ENCODE measurements at regions of chr6 and their contacts with region 1.

Region 1: DNA sequence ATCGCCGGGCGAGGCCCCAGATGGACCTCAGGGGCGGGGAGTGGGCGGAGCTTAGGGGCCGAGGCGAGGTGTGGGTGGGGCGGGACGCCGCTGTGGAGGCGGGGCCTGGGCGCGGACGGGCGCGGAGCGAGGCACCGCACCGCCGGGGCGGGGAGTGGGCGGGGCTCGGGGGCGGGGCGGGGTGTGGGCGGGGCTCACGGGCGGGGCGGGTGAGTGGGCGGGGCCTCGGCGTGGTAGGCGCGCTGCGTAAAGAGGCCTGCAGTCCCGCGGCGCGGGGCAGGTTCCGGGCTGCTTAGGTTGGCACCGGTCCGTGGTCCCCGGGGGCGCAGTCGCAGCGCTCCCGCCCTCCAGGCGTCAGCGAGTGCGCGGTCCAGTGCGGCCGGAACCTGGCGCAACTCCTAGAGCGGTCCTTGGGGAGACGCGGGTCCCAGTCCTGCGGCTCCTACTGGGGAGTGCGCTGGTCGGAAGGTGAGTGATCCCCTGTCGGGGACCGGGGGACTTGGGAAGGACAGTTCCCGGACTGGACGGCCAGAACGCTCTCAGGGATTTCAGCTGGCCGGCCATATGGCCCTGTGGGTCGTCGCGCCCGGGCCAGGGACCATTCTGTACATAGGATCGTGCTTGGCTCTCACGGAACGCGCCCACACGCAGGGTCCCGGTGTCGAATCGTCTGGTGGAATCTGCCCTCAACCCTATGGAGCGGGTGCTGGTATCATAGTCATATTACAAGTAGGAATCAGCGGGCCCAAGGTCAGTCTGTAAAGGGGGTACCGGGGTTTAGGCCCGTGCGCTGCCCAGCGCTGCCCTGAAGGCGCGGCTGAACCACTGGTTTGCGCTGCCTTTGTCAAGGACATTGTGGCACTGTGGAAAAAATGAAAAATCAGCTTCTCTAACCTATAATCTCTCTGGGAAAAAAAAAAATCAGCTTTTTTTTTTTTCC is at the start of gene NQO2:
- DNase-seq: peak; percentile 13
- ATAC-seq: peak; percentile 92
- H3K4me3 ChIP-seq: peak within 1 kb of the TSS; percentile 87
- H3K27ac ChIP-seq: no peak within 1 kb of the TSS; the same call in 1 of the 2 replicates
- H3K4me1 ChIP-seq: peaks cover 12% of the 10 kb centered on the region
- H3K27me3 ChIP-seq: no peaks in the 10 kb centered on the region
- CTCF ChIP-seq: no peak
- EP300 ChIP-seq: no peak
- POLR2A ChIP-seq: peak; percentile 87
- RAD21 ChIP-seq: no peak
- polyA plus RNA-seq, gene NQO2: 0.55 to 0.66 TPM

Region 2: DNA sequence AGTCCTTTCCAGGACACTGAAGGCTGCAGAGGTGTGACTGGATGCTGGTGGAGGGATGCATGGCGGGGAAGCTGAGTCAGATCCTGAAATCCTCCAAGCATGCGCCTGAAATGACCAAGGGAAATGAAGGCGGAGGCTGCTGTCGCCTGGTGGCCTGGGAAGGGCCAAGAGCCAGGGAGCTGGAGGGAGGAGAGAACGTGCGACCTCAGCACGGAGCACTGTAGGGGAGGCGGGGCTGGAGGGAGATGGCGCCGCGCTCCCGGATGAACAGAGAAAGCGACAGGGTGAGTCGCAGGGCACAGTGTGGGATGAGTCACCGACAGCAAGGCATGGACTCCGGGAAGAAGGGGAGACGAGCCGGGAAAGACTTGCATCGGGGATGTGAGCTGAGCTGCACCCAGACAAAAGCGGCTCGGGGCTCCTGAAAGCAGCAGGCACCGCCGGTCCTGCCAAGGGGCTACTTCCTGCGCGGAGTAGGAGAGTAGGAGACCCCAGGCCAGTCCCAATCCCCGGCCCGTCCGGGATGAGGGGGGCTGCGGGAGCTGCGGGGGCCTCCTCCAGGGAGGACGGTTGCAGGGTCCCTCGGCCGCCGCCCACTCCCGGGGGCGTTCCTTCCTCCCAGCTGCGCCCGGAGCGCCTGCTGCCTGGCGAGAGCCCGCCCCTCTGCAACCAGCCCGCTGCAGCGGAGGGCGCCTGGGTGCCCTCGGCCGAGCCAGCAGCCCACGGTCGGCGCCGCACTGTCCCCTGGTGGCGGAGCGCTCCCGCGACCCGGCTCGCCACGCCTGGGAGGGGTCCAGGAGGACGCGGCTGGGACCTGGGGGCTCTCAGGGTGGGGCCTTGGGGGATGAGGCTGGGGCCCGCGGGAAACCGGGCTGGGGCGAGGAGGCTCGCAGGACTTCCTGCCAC is 11.2 kb before region 1 on chr6:
- CTCF ChIA-PET with region 1: interaction called, 54 read pairs
- POLR2A ChIA-PET with region 1: interaction called, 6 read pairs
- RAD21 ChIA-PET with region 1: interaction called, 11 read pairs
- SMC1A ChIA-PET with region 1: interaction called, 14 read pairs
- in situ Hi-C with region 1: no loop called
- intact Hi-C with region 1: no loop called
- DNase-seq: no peak
- ATAC-seq: peak; percentile 92
- H3K4me3 ChIP-seq: peak overlapping the region; percentile 71
- H3K27ac ChIP-seq: peak overlapping the region; percentile 79
- H3K4me1 ChIP-seq: peaks cover 13% of the 10 kb centered on the region
- H3K27me3 ChIP-seq: peaks cover 0 to 2% of the 10 kb centered on the region in 2 experiments; a peak in 3 of 4 replicates
- CTCF ChIP-seq: peak; percentile 56 to 75 (median 73)
- EP300 ChIP-seq: no peak; a peak in 1 of 4 replicates
- POLR2A ChIP-seq: peak; percentile 64
- RAD21 ChIP-seq: peak; percentile 73

Region 3: DNA sequence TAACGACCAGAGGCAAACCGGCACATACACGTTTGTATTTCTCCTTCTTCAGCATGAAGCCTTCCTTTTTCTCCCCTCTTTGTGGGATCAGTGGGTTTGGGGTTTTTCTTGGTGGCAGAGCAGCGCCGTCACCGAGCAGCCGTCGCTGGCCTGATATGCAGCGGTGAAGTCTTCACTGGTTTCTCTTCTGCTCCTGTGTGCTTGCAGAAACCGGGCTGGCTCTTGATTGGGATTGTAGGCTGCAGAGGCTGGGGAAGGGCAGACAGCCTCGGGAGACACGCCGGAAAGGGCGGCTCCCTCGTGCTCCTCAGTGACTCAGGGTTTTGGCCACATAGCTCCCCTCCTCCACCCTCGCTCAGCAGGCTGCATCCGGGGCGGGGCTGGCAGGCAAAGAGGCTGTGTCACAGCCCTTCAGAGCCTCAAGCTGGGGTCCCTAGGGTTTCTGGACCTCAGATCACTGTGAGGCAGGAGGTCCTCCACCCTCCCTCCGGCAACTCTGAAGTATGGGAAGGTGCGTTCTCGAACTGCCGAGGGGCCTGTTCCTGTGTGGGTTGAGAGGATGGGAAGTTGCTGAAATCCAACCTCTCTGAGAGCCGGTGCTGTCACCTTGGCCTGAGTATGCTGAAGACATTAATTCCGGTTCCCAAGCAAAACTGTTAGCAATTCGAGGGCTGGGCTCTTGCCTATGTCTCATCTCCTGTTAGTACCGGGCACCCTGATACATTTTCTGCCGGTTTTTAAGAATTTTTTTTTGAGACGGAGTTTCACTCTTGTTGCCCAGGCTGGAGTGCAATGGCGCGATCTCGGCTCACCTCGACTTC is 24.0 kb after region 1 on chr6:
- CTCF ChIA-PET with region 1: interaction called, 13 read pairs
- POLR2A ChIA-PET with region 1: no interaction called
- RAD21 ChIA-PET with region 1: interaction called, 11 read pairs
- SMC1A ChIA-PET with region 1: interaction called, 10 read pairs
- in situ Hi-C with region 1: no loop called
- intact Hi-C with region 1: loop called (anchors 1 kb)
- DNase-seq: peak; percentile 63
- ATAC-seq: peak; percentile 90
- H3K4me3 ChIP-seq: peak overlapping the region; percentile 71
- H3K27ac ChIP-seq: peak overlapping the region; percentile 88
- H3K4me1 ChIP-seq: peaks cover 40% of the 10 kb centered on the region
- H3K27me3 ChIP-seq: no peaks in the 10 kb centered on the region
- CTCF ChIP-seq: no peak
- EP300 ChIP-seq: peak in 1 of 2 experiments; percentile 54; a peak in 1 of 4 replicates
- POLR2A ChIP-seq: peak; percentile 73
- RAD21 ChIP-seq: no peak

Region 4: DNA sequence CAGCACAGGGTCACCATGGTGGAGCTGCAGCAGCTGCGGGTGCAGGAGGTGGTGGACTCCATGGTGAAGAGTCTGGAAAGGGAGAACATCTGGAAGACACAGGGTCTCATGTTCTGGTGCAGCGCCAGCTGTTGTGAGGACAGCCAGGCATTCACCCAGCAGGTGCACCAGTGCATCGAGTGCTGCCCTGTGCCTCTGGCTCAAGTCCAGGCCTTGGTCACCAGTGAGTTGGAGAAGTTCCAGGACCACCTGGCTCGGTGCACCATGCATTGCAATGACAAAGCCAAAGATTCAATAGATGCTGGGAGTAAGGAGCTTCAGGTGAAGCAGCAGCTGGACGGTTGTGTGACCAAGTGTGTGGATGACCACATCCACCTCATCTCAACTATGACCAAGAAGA is 45.5 kb after region 1 on chr6:
- CTCF ChIA-PET with region 1: interaction called, 12 read pairs
- POLR2A ChIA-PET with region 1: no interaction called
- RAD21 ChIA-PET with region 1: interaction called, 3 read pairs
- SMC1A ChIA-PET with region 1: interaction called, 4 read pairs
- in situ Hi-C with region 1: loop called (anchors 5 kb)
- intact Hi-C with region 1: no loop called
- DNase-seq: no peak
- ATAC-seq: no peak
- H3K4me3 ChIP-seq: no peak overlapping the region
- H3K27ac ChIP-seq: no peak overlapping the region
- H3K4me1 ChIP-seq: no peaks in the 10 kb centered on the region
- H3K27me3 ChIP-seq: peaks cover 0 to 6% of the 10 kb centered on the region in 2 experiments; a peak in 2 of 4 replicates
- CTCF ChIP-seq: no peak
- EP300 ChIP-seq: no peak
- POLR2A ChIP-seq: no peak
- RAD21 ChIP-seq: no peak

Region 5: GRCh38 chr6:3052481-3053230 is 52.8 kb after region 1 on chr6:
- CTCF ChIA-PET with region 1: interaction called, 23 read pairs
- POLR2A ChIA-PET with region 1: no interaction called
- RAD21 ChIA-PET with region 1: interaction called, 12 read pairs
- SMC1A ChIA-PET with region 1: interaction called, 18 read pairs
- in situ Hi-C with region 1: loop called (anchors 5 kb)
- intact Hi-C with region 1: no loop called
- DNase-seq: no peak
- ATAC-seq: no peak
- H3K4me3 ChIP-seq: no peak overlapping the region
- H3K27ac ChIP-seq: no peak overlapping the region
- H3K4me1 ChIP-seq: no peaks in the 10 kb centered on the region
- H3K27me3 ChIP-seq: peaks cover 2 to 3% of the 10 kb centered on the region in 2 experiments; a peak in 3 of 4 replicates
- CTCF ChIP-seq: no peak
- EP300 ChIP-seq: no peak
- POLR2A ChIP-seq: no peak
- RAD21 ChIP-seq: no peak

Region 6: DNA sequence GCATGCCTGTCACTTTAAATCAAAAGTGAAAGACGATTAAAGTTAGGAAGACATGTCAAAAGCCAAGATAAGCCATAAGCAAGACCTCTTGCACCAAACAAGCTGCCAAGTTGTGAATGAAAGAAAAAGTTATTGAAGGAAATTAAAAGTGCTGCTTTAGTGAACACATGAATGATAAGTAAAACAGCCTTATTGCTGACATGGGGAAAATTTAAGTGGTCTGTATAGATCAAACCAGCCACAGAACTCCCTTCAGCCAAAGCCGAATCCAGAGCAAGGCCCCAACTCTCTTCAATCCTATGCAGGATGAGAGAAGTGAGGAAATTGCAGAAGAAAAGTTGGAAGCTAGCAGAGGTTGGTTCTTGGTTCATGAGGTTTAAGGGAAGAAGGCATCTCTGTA is 59.1 kb after region 1 on chr6:
- CTCF ChIA-PET with region 1: interaction called, 23 read pairs
- POLR2A ChIA-PET with region 1: interaction called, 4 read pairs
- RAD21 ChIA-PET with region 1: interaction called, 12 read pairs
- SMC1A ChIA-PET with region 1: interaction called, 18 read pairs
- in situ Hi-C with region 1: no loop called
- intact Hi-C with region 1: loop called (anchors 2 kb)
- DNase-seq: no peak
- ATAC-seq: no peak
- H3K4me3 ChIP-seq: no peak overlapping the region
- H3K27ac ChIP-seq: no peak overlapping the region
- H3K4me1 ChIP-seq: no peaks in the 10 kb centered on the region
- H3K27me3 ChIP-seq: no peaks in the 10 kb centered on the region
- CTCF ChIP-seq: no peak
- EP300 ChIP-seq: no peak
- POLR2A ChIP-seq: no peak
- RAD21 ChIP-seq: no peak

Region 7: GRCh38 chr6:3068329-3069214 is 68.7 kb after region 1 on chr6 and contains the start of gene RIPK1:
- CTCF ChIA-PET with region 1: interaction called, 11 read pairs
- POLR2A ChIA-PET with region 1: interaction called, 4 read pairs
- RAD21 ChIA-PET with region 1: interaction called, 6 read pairs
- SMC1A ChIA-PET with region 1: interaction called, 4 read pairs
- in situ Hi-C with region 1: no loop called
- intact Hi-C with region 1: no loop called
- DNase-seq: peak; percentile 40
- ATAC-seq: peak; percentile 90
- H3K4me3 ChIP-seq: peak within 1 kb of the TSS; percentile 73
- H3K27ac ChIP-seq: peak within 1 kb of the TSS; percentile 91
- H3K4me1 ChIP-seq: no peaks in the 10 kb centered on the region; the same call in 1 of the 2 replicates
- H3K27me3 ChIP-seq: no peaks in the 10 kb centered on the region
- CTCF ChIP-seq: peak; percentile 23 to 62 (median 35); a peak in 5 of 6 replicates
- EP300 ChIP-seq: no peak
- POLR2A ChIP-seq: peak; percentile 84
- RAD21 ChIP-seq: 0 out of 2 replicates have a peak, but pooled peaks have one; percentile 15
- polyA plus RNA-seq, gene RIPK1: 1.6 to 2.2 TPM

Measured in GM12878 (cell line).